ENCODE measurements at regions of chr7 and their contacts with region 1.

Region 1: DNA sequence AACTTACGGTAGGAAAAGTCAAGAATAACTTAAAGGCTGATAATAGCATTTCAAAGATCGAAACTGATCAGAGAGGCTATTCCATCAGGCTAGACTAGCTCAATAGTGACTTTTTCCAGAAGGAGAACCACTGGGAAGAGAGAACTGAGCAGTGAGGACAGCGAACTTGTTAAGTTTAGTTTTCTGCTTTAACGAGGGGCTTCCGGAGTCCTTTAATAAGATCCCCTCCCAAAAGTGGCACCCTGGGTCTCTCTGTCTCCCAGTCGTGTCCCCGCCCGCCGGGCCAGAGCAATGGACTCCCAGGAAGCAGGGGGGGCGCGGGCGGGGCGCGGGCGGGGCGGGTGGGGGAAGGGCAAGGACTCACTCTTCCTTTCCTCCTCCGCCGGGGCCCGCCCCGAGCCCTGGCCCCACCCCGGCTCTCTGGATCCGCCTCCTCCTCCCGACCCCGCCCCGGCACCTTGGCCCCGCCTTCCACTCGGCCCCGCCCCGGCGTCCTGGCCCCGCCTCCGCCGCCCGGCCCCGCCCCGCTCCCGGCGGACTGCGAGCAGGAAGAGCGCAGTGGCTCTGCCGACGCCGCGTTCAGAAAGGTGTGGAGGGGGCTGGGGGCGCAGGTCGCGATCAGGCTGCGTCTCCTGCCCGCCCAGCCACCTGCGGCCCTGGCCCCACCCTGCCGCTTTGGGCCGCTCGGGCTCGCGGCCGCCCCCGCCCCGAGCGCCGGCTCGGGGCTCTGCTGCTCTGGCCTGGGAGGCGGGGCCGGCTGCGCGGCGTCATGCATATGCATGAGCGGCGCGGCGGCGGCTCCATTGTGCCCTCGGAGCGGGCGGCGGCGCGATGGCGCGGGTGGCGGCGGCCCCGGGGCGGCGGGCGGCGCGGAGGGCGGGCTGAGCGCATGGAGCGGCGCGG is at the start of gene ZMIZ2:
- DNase-seq: peak; percentile 81 to 97 (median 88)
- ATAC-seq: peak; percentile 82 to 94 (median 88)
- H3K4me3 ChIP-seq: peak within 1 kb of the TSS; percentile 77 to 80
- H3K4me3 Mint-ChIP-seq: peak within 1 kb of the TSS; percentile 75 to 85 (median 83)
- H3K27ac ChIP-seq: peak within 1 kb of the TSS; percentile 85
- H3K27ac Mint-ChIP-seq: peak within 1 kb of the TSS; percentile 90 to 97
- H3K4me1 ChIP-seq: peaks cover 27 to 28% of the 10 kb centered on the region in 2 experiments
- H3K4me1 Mint-ChIP-seq: peaks cover 38 to 54% (median 43%) of the 10 kb centered on the region in 3 donors
- H3K27me3 ChIP-seq: no peaks in the 10 kb centered on the region
- H3K27me3 Mint-ChIP-seq: no peaks in the 10 kb centered on the region
- total RNA-seq, gene ZMIZ2: 112 to 172 (median 145) TPM

Region 2: DNA sequence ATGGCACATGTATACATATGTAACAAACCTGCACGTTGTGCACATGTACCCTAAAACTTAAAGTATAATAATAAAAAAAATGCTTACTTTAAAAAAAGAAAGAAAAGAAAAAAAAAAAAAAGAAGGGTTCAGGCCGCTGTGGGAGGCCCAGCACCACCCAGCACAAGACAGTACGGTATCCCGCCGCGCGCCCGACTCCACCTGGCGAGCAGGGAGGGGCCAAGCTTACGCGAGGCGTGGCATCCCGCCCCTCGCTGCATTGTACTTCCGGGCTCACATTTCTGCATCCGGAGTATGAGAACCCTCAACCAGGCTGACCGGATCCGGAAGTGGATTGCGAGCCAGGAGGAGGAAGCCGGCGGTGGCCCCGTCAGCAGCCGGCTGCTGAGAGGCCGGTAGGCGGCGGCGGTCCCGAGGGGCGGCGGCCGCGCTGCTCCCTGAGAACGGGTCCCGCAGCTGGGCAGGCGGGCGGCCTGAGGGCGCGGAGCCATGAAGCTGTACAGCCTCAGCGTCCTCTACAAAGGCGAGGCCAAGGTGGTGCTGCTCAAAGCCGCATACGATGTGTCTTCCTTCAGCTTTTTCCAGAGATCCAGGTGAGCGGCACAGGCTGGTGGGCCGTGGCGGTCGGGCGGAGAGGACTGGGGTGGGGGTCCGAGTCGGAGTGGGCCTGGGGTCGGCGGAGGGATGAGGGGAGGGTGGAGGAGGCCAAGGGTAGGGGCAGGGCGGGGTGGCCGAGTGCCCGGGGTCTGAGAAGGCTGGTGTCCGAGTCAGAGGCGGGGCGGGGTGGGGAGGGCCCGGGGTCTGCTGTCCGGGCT is 547.4 kb before region 1 on chr7 and contains the start of gene YKT6:
- CTCF ChIA-PET with region 1: no interaction called
- POLR2A ChIA-PET with region 1: no interaction called
- DNase-seq: peak; percentile 87 to 97 (median 92)
- ATAC-seq: peak; percentile 98 to 99 (median 99)
- H3K4me3 ChIP-seq: peak within 1 kb of the TSS; percentile 66 to 78
- H3K4me3 Mint-ChIP-seq: peak within 1 kb of the TSS; percentile 81 to 82 (median 81)
- H3K27ac ChIP-seq: no peak within 1 kb of the TSS
- H3K27ac Mint-ChIP-seq: peak within 1 kb of the TSS in 1 of 2 donors; percentile 48
- H3K4me1 ChIP-seq: peaks cover 9 to 11% of the 10 kb centered on the region in 2 experiments
- H3K4me1 Mint-ChIP-seq: peaks cover 31 to 36% (median 33%) of the 10 kb centered on the region in 3 donors
- H3K27me3 ChIP-seq: no peaks in the 10 kb centered on the region
- H3K27me3 Mint-ChIP-seq: peaks cover 0 to 6% of the 10 kb centered on the region in 2 donors
- total RNA-seq, gene YKT6: 55.1 to 74.3 (median 60.2) TPM

Region 3: GRCh38 chr7:44638611-44639557 is 109.4 kb before region 1 on chr7:
- CTCF ChIA-PET with region 1: no interaction called
- POLR2A ChIA-PET with region 1: interaction called in 1 of 2 experiments, 11 read pairs
- DNase-seq: peak; percentile 56 to 83 (median 70)
- ATAC-seq: peak; percentile 66 to 89 (median 86)
- H3K4me3 ChIP-seq: no peak overlapping the region
- H3K4me3 Mint-ChIP-seq: peak overlapping the region; percentile 66 to 80 (median 69)
- H3K27ac ChIP-seq: peak overlapping the region; percentile 99
- H3K27ac Mint-ChIP-seq: peak overlapping the region; percentile 98 to 100
- H3K4me1 ChIP-seq: peaks cover 26 to 85% of the 10 kb centered on the region in 2 experiments
- H3K4me1 Mint-ChIP-seq: peaks cover 59 to 85% (median 82%) of the 10 kb centered on the region in 3 donors
- H3K27me3 ChIP-seq: no peaks in the 10 kb centered on the region
- H3K27me3 Mint-ChIP-seq: no peaks in the 10 kb centered on the region

Region 4: DNA sequence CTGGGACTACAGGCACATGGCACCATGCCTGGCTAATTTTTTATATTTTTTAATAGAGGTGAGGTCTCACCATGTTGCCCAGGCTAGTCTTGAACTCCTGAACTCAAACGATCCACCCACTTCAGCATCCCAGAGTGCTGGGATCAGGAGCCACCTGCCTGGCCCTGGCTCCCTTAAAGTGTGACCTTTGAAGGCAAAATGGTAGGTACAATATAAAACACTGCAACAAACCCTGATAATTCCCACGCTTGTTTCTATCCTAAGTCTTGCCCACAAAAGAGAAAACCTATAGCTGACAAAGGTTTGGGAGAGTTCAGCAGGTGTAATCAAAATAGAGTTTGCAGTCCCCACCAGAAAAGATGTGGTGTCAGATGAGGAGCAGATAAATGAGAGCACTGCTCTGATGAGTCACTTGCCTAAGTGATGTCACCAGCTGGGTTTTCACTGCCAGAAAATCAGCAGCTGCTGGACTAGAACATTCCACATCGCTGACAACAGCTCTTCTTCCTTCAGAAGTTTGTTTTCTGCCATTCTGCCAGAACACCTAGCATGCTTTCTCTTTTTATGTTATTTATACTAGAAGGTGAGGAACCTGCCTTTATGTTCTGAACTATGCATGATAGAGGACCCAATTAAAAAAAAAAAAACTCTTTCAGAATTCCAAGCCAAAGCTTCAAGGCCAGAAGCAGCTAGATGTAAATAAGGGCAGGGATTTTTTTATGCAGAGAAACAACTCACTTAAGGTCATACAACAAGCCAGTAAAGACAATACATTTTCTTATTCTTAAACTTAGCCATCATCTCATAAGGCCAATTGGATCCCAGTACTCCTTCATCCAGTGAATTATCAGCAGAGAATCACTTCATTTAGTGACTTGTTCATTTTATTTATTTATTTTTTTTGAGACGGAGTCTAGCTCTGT is 119.0 kb after region 1 on chr7:
- CTCF ChIA-PET with region 1: interaction called in 1 of 2 experiments, 10 read pairs
- POLR2A ChIA-PET with region 1: no interaction called
- DNase-seq: no peak
- ATAC-seq: no peak
- H3K4me3 ChIP-seq: no peak overlapping the region
- H3K4me3 Mint-ChIP-seq: no peak overlapping the region
- H3K27ac ChIP-seq: no peak overlapping the region
- H3K27ac Mint-ChIP-seq: no peak overlapping the region
- H3K4me1 ChIP-seq: no peaks in the 10 kb centered on the region
- H3K4me1 Mint-ChIP-seq: peaks cover 0 to 4% (median 3%) of the 10 kb centered on the region in 3 donors
- H3K27me3 ChIP-seq: peaks cover 0 to 7% of the 10 kb centered on the region in 2 experiments
- H3K27me3 Mint-ChIP-seq: no peaks in the 10 kb centered on the region